Activated T-helper 2 cell treated with anti-CD3 and anti-CD28 coated beads, Interferon-gamma antibody, Interleukin-2, Interleukin-4, amounts not matched to agents 10 μg/mL and 5 μg/mL and 100 μg/mL, durations not matched to agents 14 hours and 24 hours and 36 hours (primary cell): ENCODE measurements at regions of chr20 and their contacts with region 1.

Region 1: DNA sequence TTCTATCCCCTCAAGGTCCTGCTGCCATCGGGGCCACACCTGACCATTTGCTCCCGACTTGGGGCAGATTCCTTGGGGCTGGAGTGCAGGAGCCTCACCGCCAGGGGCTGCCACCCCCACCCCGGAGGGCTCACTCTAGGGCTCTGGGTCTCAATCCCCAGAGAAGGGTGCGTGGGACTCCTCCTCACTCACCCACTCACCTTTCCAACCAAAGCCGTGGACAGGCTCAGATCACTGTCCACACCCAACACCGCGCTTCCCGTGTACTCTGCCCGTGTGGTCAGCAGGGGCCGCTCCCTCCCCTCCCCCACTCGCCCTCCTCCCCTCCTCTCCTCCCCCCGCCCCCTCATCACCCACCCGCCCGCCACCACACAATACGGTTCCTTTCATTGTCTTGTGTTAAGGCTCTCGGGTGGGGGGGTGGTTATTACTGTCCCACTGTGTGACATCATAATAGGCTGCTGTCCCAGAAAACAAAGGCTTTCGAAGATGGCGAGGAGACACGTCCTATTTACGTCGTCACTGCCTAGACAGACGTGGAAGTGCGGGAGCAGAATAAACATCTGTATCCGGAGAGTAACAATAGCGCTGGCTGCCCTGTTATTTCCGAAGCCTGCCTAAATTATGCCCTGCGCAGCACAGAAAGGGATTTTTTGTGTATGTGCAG is 85.8 kb downstream of the YTHDF1 start:
- DNase-seq: no peak
- H3K4me3 Mint-ChIP-seq: no peak overlapping the region
- H3K27ac Mint-ChIP-seq: no peak overlapping the region
- H3K4me1 Mint-ChIP-seq: no peaks in the 10 kb centered on the region
- H3K27me3 Mint-ChIP-seq: no peaks in the 10 kb centered on the region

Region 2: GRCh38 chr20:63106108-63106764 is 23.9 kb before region 1 on chr20:
- intact Hi-C with region 1: loop called (anchors 1 kb)
- DNase-seq: no peak
- H3K4me3 Mint-ChIP-seq: no peak overlapping the region
- H3K27ac Mint-ChIP-seq: no peak overlapping the region
- H3K4me1 Mint-ChIP-seq: peaks cover 4% of the 10 kb centered on the region
- H3K27me3 Mint-ChIP-seq: no peaks in the 10 kb centered on the region

Region 3: GRCh38 chr20:63116412-63117099 is 13.6 kb before region 1 on chr20:
- intact Hi-C with region 1: no loop called
- DNase-seq: no peak
- H3K4me3 Mint-ChIP-seq: no peak overlapping the region
- H3K27ac Mint-ChIP-seq: no peak overlapping the region
- H3K4me1 Mint-ChIP-seq: no peaks in the 10 kb centered on the region
- H3K27me3 Mint-ChIP-seq: no peaks in the 10 kb centered on the region